Heart left ventricle (tissue), 16 donors: ENCODE measurements at regions of chr19 and their contacts with region 1.

Region 1: GRCh38 chr19:3771906-3772455 is at the start of gene RAX2:
- DNase-seq: no peak
- ATAC-seq: no peak
- H3K4me3 ChIP-seq: no peak within 1 kb of the TSS
- H3K27ac ChIP-seq: no peak within 1 kb of the TSS
- H3K4me1 ChIP-seq: no peaks in the 10 kb centered on the region
- H3K27me3 ChIP-seq: no peaks in the 10 kb centered on the region
- CTCF ChIP-seq: no peak
- POLR2A ChIP-seq: no peak
- total RNA-seq, gene RAX2: not detected

Region 2: GRCh38 chr19:1884719-1885334 is 1887.2 kb before region 1 on chr19:
- intact Hi-C with region 1: no loop called
- DNase-seq: no peak
- ATAC-seq: peak in 2 of 4 donors; percentile 1 to 10
- H3K4me3 ChIP-seq: peak overlapping the region; percentile 71 to 99 (median 96)
- H3K27ac ChIP-seq: peak overlapping the region; percentile 86 to 97 (median 92)
- H3K4me1 ChIP-seq: peaks cover 4 to 67% (median 39%) of the 10 kb centered on the region in 12 donors
- H3K27me3 ChIP-seq: no peaks in the 10 kb centered on the region
- CTCF ChIP-seq: no peak
- POLR2A ChIP-seq: no peak

Region 3: DNA sequence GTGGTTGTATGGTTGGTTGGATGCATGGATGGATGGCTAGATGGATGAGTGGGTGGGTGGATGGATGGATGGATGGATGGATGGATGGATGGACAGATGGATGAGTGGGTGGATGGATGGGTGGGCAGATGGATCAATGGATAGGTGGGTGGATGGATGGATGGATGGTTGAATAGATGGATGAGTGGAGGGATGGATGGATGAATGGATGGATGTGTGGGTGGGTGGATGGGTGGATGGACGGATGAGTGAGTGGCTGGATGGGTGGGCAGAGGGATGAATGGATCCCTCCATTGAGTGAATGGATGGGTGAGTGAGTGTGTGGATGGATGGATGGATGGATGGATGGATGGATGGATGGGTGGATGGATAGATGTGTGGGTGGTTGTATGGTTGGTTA is 151.9 kb after region 1 on chr19:
- intact Hi-C with region 1: loop called in 1 of 10 experiments (anchors 10 kb)
- DNase-seq: no peak
- ATAC-seq: no peak
- H3K4me3 ChIP-seq: no peak overlapping the region
- H3K27ac ChIP-seq: no peak overlapping the region
- H3K4me1 ChIP-seq: no peaks in the 10 kb centered on the region
- H3K27me3 ChIP-seq: no peaks in the 10 kb centered on the region
- CTCF ChIP-seq: no peak
- POLR2A ChIP-seq: no peak